PC-3 (cell line): ENCODE measurements at regions of chr7 and their contacts with region 1.

Region 1: GRCh38 chr7:102236592-102237287 is 49.9 kb upstream of the SH2B2 start:
- DNase-seq: peak; percentile 70
- ATAC-seq: peak; percentile 97
- H3K4me3 ChIP-seq: no peak overlapping the region
- H3K27ac ChIP-seq: no peak overlapping the region
- H3K4me1 ChIP-seq: no peaks in the 10 kb centered on the region
- H3K27me3 ChIP-seq: no peaks in the 10 kb centered on the region
- CTCF ChIP-seq: peak; percentile 87

Region 2: GRCh38 chr7:101542527-101543241 is 694.1 kb before region 1 on chr7:
- CTCF ChIA-PET with region 1: no interaction called
- POLR2A ChIA-PET with region 1: no interaction called
- intact Hi-C with region 1: loop called (anchors 1 kb)
- DNase-seq: peak; percentile 75
- ATAC-seq: peak; percentile 62
- H3K4me3 ChIP-seq: no peak overlapping the region
- H3K27ac ChIP-seq: no peak overlapping the region
- H3K4me1 ChIP-seq: no peaks in the 10 kb centered on the region
- H3K27me3 ChIP-seq: no peaks in the 10 kb centered on the region
- CTCF ChIP-seq: peak; percentile 88

Region 3: DNA sequence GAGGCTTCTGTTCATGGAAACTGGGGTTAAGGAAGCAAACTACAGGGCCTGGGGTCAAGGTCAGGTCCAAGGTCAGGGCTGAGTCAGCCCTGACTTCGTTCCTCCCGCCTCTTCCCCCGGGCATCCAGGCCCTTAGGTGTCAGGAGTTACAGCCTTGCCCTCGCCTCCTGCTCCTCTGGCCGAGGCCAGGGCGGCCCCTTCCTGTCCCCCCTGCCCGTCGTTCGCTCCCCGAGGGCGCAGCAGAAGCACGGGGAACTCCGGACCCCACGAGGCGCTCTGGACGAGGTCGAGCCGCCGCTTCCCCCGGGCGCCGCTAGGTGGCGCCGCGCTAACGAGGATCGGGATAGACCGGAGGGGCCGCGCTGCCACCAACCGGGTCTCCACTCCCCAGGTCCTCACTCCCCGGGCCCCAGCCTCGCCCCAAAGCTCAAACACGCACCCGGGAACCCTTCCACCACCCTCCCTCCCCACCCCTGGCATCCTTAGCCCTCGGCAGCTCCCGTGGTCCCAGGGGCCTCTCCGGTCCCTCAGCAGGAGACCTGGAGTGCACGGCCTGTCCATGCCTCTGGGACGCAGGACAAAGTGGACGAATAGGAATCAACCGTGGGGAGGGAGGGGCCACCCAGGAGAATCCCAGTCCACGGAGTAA is 548.4 kb before region 1 on chr7:
- CTCF ChIA-PET with region 1: no interaction called
- POLR2A ChIA-PET with region 1: no interaction called
- intact Hi-C with region 1: loop called (anchors 1 kb)
- DNase-seq: peak; percentile 70
- ATAC-seq: peak; percentile 94
- H3K4me3 ChIP-seq: peak overlapping the region; percentile 40
- H3K27ac ChIP-seq: no peak overlapping the region
- H3K4me1 ChIP-seq: no peaks in the 10 kb centered on the region
- H3K27me3 ChIP-seq: no peaks in the 10 kb centered on the region
- CTCF ChIP-seq: peak; percentile 82